Esophagus muscularis mucosa (tissue), 4 donors: ENCODE measurements at regions of chr3 and their contacts with region 1.

Region 1: GRCh38 chr3:103729547-103729946 is 1294.7 kb downstream of the ZPLD1 start:
- DNase-seq: no peak
- H3K4me3 ChIP-seq: no peak overlapping the region
- H3K27ac ChIP-seq: no peak overlapping the region
- H3K4me1 ChIP-seq: no peaks in the 10 kb centered on the region
- H3K27me3 ChIP-seq: no peaks in the 10 kb centered on the region
- CTCF ChIP-seq: no peak
- EP300 ChIP-seq: no peak
- POLR2A ChIP-seq: no peak

Region 2: GRCh38 chr3:103862415-103862814 is 132.9 kb after region 1 on chr3:
- intact Hi-C with region 1: loop called (anchors 5 kb)
- DNase-seq: no peak
- H3K4me3 ChIP-seq: no peak overlapping the region
- H3K27ac ChIP-seq: no peak overlapping the region
- H3K4me1 ChIP-seq: no peaks in the 10 kb centered on the region
- H3K27me3 ChIP-seq: no peaks in the 10 kb centered on the region
- CTCF ChIP-seq: no peak
- EP300 ChIP-seq: no peak
- POLR2A ChIP-seq: no peak